Activated CD4-positive, alpha-beta memory T cell treated with anti-CD3 and anti-CD28 coated beads for 36 hours (primary cell): ENCODE measurements at regions of chr1 and their contacts with region 1.

Region 1: DNA sequence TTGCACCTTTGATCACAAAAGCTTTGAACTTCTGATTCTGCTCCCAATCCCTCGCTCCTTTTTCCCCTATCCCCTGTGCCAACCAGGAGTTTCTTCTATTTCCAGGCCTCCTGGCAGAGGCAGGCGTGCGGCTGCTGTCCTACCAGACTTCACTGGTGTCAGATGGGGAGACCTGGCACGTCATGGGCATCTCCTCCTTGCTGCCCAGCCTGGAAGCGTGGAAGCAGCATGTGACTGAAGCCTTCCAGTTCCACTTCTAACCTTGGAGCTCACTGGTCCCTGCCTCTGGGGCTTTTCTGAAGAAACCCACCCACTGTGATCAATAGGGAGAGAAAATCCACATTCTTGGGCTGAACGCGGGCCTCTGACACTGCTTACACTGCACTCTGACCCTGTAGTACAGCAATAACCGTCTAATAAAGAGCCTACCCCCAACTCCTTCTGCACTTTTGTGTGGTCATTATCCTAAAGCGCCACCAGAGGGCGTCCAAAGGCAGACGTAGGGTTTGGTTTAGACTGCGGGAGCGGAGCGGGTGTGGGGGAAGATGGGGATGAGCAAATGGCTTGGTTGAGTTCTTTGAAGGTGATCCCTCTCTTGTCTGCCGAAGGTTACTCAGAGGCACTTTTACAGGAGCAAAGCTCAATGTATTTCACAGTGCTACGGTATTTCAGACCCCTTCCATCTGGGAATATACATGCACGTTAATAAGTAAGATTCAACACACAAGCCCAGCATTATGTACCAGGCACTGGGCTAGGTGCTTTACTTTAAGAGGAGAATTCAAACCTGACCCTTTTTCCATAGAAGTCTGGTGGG is 24.7 kb downstream of the HMGCS2 start:
- DNase-seq: peak; percentile 63
- H3K4me3 Mint-ChIP-seq: no peak overlapping the region
- H3K27ac Mint-ChIP-seq: no peak overlapping the region
- H3K4me1 Mint-ChIP-seq: no peaks in the 10 kb centered on the region
- H3K27me3 Mint-ChIP-seq: no peaks in the 10 kb centered on the region

Region 2: GRCh38 chr1:119613769-119614720 is 129.9 kb before region 1 on chr1:
- CTCF ChIA-PET with region 1: no interaction called
- POLR2A ChIA-PET with region 1: no interaction called
- intact Hi-C with region 1: loop called (anchors 1 kb)
- DNase-seq: peak; percentile 77
- H3K4me3 Mint-ChIP-seq: no peak overlapping the region
- H3K27ac Mint-ChIP-seq: no peak overlapping the region
- H3K4me1 Mint-ChIP-seq: no peaks in the 10 kb centered on the region
- H3K27me3 Mint-ChIP-seq: peaks cover 2% of the 10 kb centered on the region

Region 3: GRCh38 chr1:119674835-119675289 is 69.1 kb before region 1 on chr1:
- CTCF ChIA-PET with region 1: no interaction called
- POLR2A ChIA-PET with region 1: no interaction called
- intact Hi-C with region 1: no loop called
- DNase-seq: no peak
- H3K4me3 Mint-ChIP-seq: no peak overlapping the region
- H3K27ac Mint-ChIP-seq: no peak overlapping the region
- H3K4me1 Mint-ChIP-seq: no peaks in the 10 kb centered on the region
- H3K27me3 Mint-ChIP-seq: peaks cover 4% of the 10 kb centered on the region

Region 4: GRCh38 chr1:119702384-119702783 is 41.6 kb before region 1 on chr1:
- CTCF ChIA-PET with region 1: no interaction called
- POLR2A ChIA-PET with region 1: no interaction called
- intact Hi-C with region 1: no loop called
- DNase-seq: no peak
- H3K4me3 Mint-ChIP-seq: no peak overlapping the region
- H3K27ac Mint-ChIP-seq: no peak overlapping the region
- H3K4me1 Mint-ChIP-seq: no peaks in the 10 kb centered on the region
- H3K27me3 Mint-ChIP-seq: peaks cover 17% of the 10 kb centered on the region

Region 5: GRCh38 chr1:119732465-119733168 is 11.4 kb before region 1 on chr1:
- CTCF ChIA-PET with region 1: interaction called, 12 read pairs
- POLR2A ChIA-PET with region 1: interaction called, 3 read pairs
- intact Hi-C with region 1: no loop called
- DNase-seq: no peak
- H3K4me3 Mint-ChIP-seq: no peak overlapping the region
- H3K27ac Mint-ChIP-seq: no peak overlapping the region
- H3K4me1 Mint-ChIP-seq: no peaks in the 10 kb centered on the region
- H3K27me3 Mint-ChIP-seq: no peaks in the 10 kb centered on the region

Region 6: DNA sequence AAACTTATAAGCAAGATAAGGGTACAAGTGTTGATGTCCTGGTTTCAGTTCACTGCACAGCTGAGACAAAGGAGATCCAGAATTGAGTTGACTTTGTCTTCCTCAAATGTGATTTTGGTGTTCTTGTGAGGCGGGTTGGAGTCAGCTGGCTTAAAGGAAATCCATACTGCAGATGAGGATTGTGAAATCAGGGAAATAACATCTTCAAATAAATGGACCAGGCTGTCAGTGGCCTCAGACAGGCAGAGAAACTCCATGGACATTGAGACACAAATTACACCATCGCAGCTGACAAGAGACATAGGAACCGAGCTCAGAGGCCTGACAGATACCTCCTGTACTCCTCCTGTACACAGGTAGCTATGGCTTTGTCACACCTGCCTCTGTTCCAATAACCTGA is 94.2 kb after region 1 on chr1:
- CTCF ChIA-PET with region 1: no interaction called
- POLR2A ChIA-PET with region 1: no interaction called
- intact Hi-C with region 1: no loop called
- DNase-seq: no peak
- H3K4me3 Mint-ChIP-seq: no peak overlapping the region
- H3K27ac Mint-ChIP-seq: no peak overlapping the region
- H3K4me1 Mint-ChIP-seq: no peaks in the 10 kb centered on the region
- H3K27me3 Mint-ChIP-seq: peaks cover 5% of the 10 kb centered on the region